ENCODE measurements at regions of chr19 and their contacts with region 1.

Region 1: DNA sequence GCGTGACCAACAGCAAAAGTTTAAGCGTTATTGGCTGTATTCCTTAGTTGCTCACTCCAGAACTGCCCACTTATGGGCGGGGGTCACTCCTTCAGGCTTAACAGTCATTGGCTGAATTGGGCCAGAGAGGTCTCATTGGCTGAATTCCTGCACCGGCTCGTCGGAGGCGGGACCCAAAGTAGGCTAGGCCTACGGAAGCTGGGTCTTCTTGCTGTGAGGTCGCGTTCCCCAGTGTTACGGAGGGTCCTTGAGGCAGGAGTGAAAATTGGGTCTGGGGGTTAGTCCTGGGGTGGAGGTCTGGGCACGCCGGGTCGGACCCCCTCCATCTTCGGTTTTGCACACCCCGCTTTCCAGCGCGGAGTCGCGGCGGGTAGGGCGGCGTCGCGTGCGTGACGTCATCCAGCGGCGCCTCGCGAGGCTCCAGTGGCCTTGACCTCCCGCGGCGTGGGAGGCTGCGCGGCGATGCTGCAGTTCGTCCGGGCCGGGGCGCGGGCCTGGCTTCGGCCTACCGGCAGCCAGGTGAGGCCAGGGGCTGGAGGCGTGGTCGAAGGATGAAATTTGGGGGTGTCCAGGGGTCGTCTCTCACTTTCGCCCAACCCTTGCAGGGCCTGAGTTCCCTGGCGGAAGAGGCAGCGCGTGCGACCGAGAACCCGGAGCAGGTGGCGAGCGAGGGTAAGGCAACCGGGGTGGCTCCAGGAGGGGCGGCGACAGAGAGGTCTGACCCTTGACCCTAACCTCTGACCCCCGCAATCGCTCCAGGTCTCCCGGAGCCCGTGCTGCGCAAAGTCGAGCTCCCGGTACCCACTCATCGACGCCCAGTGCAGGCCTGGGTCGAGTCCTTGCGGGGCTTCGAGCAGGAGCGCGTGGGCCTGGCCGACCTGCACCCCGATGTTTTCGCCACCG is at the start of gene MRPL4:
- DNase-seq: peak; percentile 82 to 98 (median 96)
- ATAC-seq: peak; percentile 98
- H3K4me3 ChIP-seq: peak within 1 kb of the TSS; percentile 90
- H3K4me3 Mint-ChIP-seq: peak within 1 kb of the TSS; percentile 93 to 100 (median 98)
- H3K27ac ChIP-seq: peak within 1 kb of the TSS; percentile 78
- H3K27ac Mint-ChIP-seq: peak within 1 kb of the TSS; percentile 92 to 99 (median 97)
- H3K4me1 ChIP-seq: peaks cover 6 to 12% of the 10 kb centered on the region in 2 donors
- H3K4me1 Mint-ChIP-seq: peaks cover 6 to 33% (median 24%) of the 10 kb centered on the region in 7 donors
- H3K27me3 ChIP-seq: no peaks in the 10 kb centered on the region
- H3K27me3 Mint-ChIP-seq: no peaks in the 10 kb centered on the region
- total RNA-seq, gene MRPL4: 36.8 to 70.5 (median 43.0) TPM

Region 2: DNA sequence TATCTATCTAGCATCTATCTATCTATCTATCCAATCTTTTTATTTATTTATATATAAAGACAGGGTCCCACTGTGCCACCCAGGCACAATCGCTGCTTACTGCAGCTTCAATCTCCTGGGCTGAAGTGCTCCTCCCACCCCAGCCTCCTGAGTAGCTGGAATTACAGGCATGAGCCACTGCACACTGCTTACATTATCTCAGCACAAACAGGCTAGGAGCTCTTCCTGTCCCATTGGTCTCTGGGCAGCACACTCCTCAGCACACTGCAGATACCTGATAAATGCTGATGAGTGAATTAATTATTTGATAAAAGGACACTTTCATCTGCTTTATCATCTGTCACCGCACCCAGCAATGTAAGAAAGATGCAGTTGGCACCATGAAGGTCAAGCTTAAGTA is 593.3 kb before region 1 on chr19:
- CTCF ChIA-PET with region 1: no interaction called
- POLR2A ChIA-PET with region 1: no interaction called
- intact Hi-C with region 1: no loop called
- DNase-seq: no peak
- ATAC-seq: no peak
- H3K4me3 ChIP-seq: no peak overlapping the region
- H3K4me3 Mint-ChIP-seq: no peak overlapping the region
- H3K27ac ChIP-seq: no peak overlapping the region
- H3K27ac Mint-ChIP-seq: no peak overlapping the region
- H3K4me1 ChIP-seq: no peaks in the 10 kb centered on the region
- H3K4me1 Mint-ChIP-seq: peaks cover 0 to 19% (median 4%) of the 10 kb centered on the region in 7 donors
- H3K27me3 ChIP-seq: no peaks in the 10 kb centered on the region
- H3K27me3 Mint-ChIP-seq: no peaks in the 10 kb centered on the region

Region 3: GRCh38 chr19:9827289-9828238 is 424.5 kb before region 1 on chr19 and contains the start of gene UBL5:
- CTCF ChIA-PET with region 1: no interaction called
- POLR2A ChIA-PET with region 1: no interaction called
- intact Hi-C with region 1: loop called in 1 of 2 experiments (anchors 2 kb)
- DNase-seq: peak; percentile 72 to 91 (median 89)
- ATAC-seq: peak; percentile 98
- H3K4me3 ChIP-seq: peak within 1 kb of the TSS; percentile 97
- H3K4me3 Mint-ChIP-seq: peak within 1 kb of the TSS; percentile 90 to 100 (median 99)
- H3K27ac ChIP-seq: peak within 1 kb of the TSS; percentile 87
- H3K27ac Mint-ChIP-seq: peak within 1 kb of the TSS; percentile 83 to 99 (median 98)
- H3K4me1 ChIP-seq: peaks cover 14 to 16% of the 10 kb centered on the region in 2 donors
- H3K4me1 Mint-ChIP-seq: peaks cover 15 to 45% (median 27%) of the 10 kb centered on the region in 7 donors
- H3K27me3 ChIP-seq: no peaks in the 10 kb centered on the region
- H3K27me3 Mint-ChIP-seq: no peaks in the 10 kb centered on the region
- total RNA-seq, gene UBL5: 182 to 375 (median 198) TPM

Region 4: DNA sequence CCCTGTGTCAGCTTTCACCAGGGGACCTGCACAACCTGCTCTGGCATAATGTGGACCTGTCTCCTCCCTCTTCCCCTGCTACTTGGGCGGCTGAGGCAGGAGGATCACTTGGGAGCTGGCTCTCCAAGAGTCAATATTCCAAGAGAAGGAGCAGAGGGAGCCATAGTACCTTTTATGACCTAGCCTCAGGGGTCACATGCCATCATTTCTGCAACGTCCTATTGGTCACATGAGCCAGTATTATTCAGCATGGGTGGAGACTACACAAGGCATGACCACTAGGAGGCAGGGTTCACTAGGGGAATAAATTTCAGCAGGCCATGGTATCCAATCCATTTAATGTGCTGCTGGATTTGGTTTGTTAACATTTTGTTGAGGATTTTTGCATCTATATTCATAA is 177.9 kb before region 1 on chr19:
- CTCF ChIA-PET with region 1: interaction called, 3 read pairs
- POLR2A ChIA-PET with region 1: no interaction called
- intact Hi-C with region 1: loop called in 1 of 2 experiments (anchors 1 kb)
- DNase-seq: peak in 8 of 9 donors; percentile 29 to 58 (median 42)
- ATAC-seq: peak; percentile 87
- H3K4me3 ChIP-seq: no peak overlapping the region
- H3K4me3 Mint-ChIP-seq: no peak overlapping the region
- H3K27ac ChIP-seq: no peak overlapping the region
- H3K27ac Mint-ChIP-seq: no peak overlapping the region
- H3K4me1 ChIP-seq: no peaks in the 10 kb centered on the region
- H3K4me1 Mint-ChIP-seq: peaks cover 0 to 2% (median 0%) of the 10 kb centered on the region in 7 donors
- H3K27me3 ChIP-seq: no peaks in the 10 kb centered on the region
- H3K27me3 Mint-ChIP-seq: peaks cover 0 to 13% (median 0%) of the 10 kb centered on the region in 5 donors

Region 5: DNA sequence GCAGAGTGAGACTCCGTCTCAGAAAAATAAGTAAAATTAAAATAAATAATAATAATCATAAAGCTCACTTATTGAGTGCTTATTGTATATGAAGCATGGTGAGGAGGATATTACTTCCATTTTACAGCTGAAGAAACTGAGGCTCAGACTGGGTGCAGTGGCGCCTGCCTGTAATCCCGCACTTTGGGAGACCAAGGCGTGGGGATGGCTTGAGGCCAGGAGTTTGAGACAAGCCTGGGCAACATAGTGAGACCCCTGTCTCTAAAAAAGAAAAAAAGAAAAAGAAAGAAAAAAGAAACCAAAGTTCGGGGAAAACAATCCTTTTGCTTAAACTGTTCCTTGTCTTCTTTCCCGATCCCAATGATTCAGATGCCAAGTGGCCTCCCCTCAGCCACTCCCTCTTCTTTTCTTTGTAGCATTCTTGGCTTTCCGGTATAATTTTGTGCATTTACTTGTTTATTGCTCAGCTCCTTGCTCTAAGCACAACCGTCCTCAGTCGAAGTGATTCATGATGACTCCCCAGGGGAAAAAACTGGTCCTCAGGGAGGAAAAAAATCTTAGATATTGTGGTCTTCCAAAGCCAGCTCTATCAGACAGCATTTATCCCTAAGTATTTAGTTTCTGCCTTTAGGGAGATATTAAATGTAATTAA is 131.4 kb before region 1 on chr19:
- CTCF ChIA-PET with region 1: interaction called, 5 read pairs
- POLR2A ChIA-PET with region 1: no interaction called
- intact Hi-C with region 1: loop called (anchors 1 to 2 kb)
- DNase-seq: no peak
- ATAC-seq: no peak
- H3K4me3 ChIP-seq: no peak overlapping the region
- H3K4me3 Mint-ChIP-seq: peak overlapping the region in 4 of 10 donors; percentile 15 to 42 (median 34)
- H3K27ac ChIP-seq: no peak overlapping the region
- H3K27ac Mint-ChIP-seq: no peak overlapping the region
- H3K4me1 ChIP-seq: peaks cover 10 to 25% of the 10 kb centered on the region in 2 donors
- H3K4me1 Mint-ChIP-seq: peaks cover 5 to 30% (median 15%) of the 10 kb centered on the region in 7 donors
- H3K27me3 ChIP-seq: no peaks in the 10 kb centered on the region
- H3K27me3 Mint-ChIP-seq: no peaks in the 10 kb centered on the region

Region 6: DNA sequence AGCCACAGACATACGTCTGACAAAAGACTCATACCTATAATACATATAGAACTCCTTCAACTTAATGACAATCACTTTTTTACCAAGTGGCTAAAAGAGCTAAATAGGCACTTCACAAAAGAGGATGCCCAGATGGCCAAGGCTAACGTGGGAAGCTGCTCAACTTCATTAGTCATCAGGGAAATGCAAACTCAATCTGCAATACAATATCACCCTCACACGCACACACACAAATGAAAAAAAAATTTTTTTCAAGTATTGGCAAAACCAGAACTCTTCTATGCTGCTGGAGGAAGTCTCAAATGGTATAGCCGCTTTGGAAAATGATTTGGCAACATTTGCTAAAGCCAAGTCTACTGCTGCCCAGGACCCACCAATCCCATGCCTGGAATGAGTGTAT is 42.7 kb before region 1 on chr19:
- CTCF ChIA-PET with region 1: no interaction called
- POLR2A ChIA-PET with region 1: no interaction called
- intact Hi-C with region 1: no loop called
- DNase-seq: no peak
- ATAC-seq: peak; percentile 44
- H3K4me3 ChIP-seq: no peak overlapping the region
- H3K4me3 Mint-ChIP-seq: no peak overlapping the region
- H3K27ac ChIP-seq: no peak overlapping the region
- H3K27ac Mint-ChIP-seq: no peak overlapping the region
- H3K4me1 ChIP-seq: no peaks in the 10 kb centered on the region
- H3K4me1 Mint-ChIP-seq: peaks cover 0 to 8% (median 0%) of the 10 kb centered on the region in 7 donors
- H3K27me3 ChIP-seq: no peaks in the 10 kb centered on the region
- H3K27me3 Mint-ChIP-seq: no peaks in the 10 kb centered on the region

Region 7: DNA sequence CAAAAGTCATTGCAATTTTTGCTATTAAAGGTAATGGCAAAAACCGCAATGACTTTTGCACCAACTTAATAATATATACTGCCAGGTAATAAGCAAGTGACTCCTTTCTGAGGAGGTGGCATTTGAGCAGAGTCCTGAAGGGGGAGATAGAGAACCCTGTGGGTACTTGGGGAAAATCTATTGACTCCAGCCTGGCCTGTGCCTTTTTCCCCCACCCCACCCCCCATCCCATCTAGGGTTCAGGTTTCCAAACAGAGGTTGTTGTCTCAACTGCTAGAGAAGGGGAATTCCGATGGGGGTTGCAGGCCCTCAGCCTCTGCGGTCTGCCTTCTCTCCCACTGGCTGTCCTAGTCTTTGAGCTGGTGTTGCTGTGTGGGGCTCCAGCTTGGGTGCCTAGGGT is 32.4 kb before region 1 on chr19:
- CTCF ChIA-PET with region 1: no interaction called
- POLR2A ChIA-PET with region 1: no interaction called
- intact Hi-C with region 1: loop called in 1 of 2 experiments (anchors 5 kb)
- DNase-seq: peak in 3 of 9 donors; percentile 17 to 33 (median 17)
- ATAC-seq: peak; percentile 81
- H3K4me3 ChIP-seq: no peak overlapping the region
- H3K4me3 Mint-ChIP-seq: no peak overlapping the region
- H3K27ac ChIP-seq: no peak overlapping the region
- H3K27ac Mint-ChIP-seq: no peak overlapping the region
- H3K4me1 ChIP-seq: no peaks in the 10 kb centered on the region
- H3K4me1 Mint-ChIP-seq: peaks cover 0 to 8% (median 3%) of the 10 kb centered on the region in 7 donors
- H3K27me3 ChIP-seq: no peaks in the 10 kb centered on the region
- H3K27me3 Mint-ChIP-seq: no peaks in the 10 kb centered on the region

Region 8: GRCh38 chr19:10292206-10292788 is 40.3 kb after region 1 on chr19:
- CTCF ChIA-PET with region 1: no interaction called
- POLR2A ChIA-PET with region 1: no interaction called
- intact Hi-C with region 1: no loop called
- DNase-seq: peak in 8 of 9 donors; percentile 49 to 85 (median 54)
- ATAC-seq: peak; percentile 74
- H3K4me3 ChIP-seq: peak overlapping the region; percentile 54
- H3K4me3 Mint-ChIP-seq: peak overlapping the region; percentile 70 to 87 (median 80)
- H3K27ac ChIP-seq: no peak overlapping the region
- H3K27ac Mint-ChIP-seq: peak overlapping the region in 4 of 9 donors; percentile 34 to 88 (median 68)
- H3K4me1 ChIP-seq: peaks cover 62 to 66% of the 10 kb centered on the region in 2 donors
- H3K4me1 Mint-ChIP-seq: peaks cover 44 to 71% (median 60%) of the 10 kb centered on the region in 7 donors
- H3K27me3 ChIP-seq: peaks cover 8 to 55% of the 10 kb centered on the region in 2 donors
- H3K27me3 Mint-ChIP-seq: peaks cover 43 to 81% (median 52%) of the 10 kb centered on the region in 5 donors

Region 9: DNA sequence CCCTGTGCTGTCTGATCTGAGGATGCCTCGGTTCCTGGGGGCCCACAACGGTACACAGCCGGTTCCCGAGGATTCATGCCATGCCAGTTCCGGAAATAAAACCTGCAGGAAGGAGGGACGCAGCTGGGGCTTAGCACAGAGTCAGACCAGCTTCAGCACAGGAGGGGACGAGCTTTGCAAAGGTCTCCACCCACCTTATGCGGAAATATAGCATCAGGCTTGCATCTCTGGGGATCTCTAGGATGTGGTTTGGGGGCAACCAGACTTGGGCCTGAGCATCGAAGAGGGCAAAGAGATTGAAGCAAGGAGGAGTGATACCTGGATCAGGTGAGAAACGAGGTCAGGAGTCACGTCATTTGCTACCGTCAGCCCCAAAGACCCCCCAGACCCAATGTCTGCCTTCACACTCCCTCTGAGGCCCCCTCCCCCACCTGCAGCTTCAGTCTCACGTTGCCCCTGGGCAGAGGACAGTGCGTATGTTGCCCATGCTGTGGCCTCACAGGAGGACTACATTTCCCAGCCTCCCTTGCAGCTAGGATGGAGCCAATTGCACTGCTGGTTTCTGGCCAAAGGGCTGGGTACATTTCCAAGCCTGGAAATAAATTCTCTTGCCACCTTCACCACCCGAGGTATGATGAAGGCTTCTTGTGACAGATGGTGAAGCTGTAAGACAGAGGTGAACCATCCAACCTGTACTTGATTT is 116.2 kb after region 1 on chr19:
- CTCF ChIA-PET with region 1: no interaction called
- POLR2A ChIA-PET with region 1: no interaction called
- intact Hi-C with region 1: no loop called
- DNase-seq: no peak
- ATAC-seq: no peak
- H3K4me3 ChIP-seq: no peak overlapping the region
- H3K4me3 Mint-ChIP-seq: no peak overlapping the region
- H3K27ac ChIP-seq: no peak overlapping the region
- H3K27ac Mint-ChIP-seq: no peak overlapping the region
- H3K4me1 ChIP-seq: no peaks in the 10 kb centered on the region
- H3K4me1 Mint-ChIP-seq: peaks cover 0 to 6% (median 0%) of the 10 kb centered on the region in 7 donors
- H3K27me3 ChIP-seq: no peaks in the 10 kb centered on the region
- H3K27me3 Mint-ChIP-seq: no peaks in the 10 kb centered on the region

Region 10: DNA sequence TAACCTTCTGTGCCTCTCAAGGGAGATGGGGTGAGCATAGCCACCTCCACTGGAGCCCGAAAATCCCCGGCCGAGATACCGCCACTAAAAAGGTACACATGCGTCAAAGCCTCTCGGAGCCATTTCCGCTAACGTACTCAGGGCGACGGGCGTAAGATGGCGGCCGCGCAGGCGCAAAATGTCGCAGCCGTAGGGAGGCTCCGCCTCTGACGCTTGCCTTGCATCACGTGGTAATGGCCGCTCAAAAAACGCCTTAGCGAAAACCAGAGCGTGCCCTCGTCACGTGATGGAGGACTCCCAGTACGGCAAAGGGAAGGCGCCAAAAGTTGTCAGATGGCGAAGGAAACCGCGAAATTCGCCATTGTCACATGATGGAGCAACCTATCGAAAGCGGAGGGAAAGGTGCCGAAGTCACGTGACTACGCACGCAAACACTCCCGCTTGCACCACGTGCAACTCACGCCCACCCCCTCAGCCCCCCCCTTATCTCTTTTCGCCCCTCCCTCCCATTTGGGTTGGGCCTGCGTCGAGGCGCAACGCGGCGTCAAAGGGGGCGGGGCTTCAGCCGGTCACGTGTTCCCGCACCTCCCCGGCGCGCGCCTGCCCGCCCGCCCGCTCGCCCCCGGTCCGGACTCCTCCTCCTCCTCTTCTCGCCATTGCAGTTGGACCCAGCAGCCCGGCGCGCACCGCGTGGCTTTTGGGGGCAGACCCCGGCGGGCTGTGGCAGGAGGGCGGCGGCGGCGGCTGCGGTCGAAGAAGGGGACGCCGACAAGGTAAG is 401.9 kb after region 1 on chr19 and contains the start of gene ILF3:
- CTCF ChIA-PET with region 1: no interaction called
- POLR2A ChIA-PET with region 1: no interaction called
- intact Hi-C with region 1: loop called in 1 of 2 experiments (anchors 5 kb)
- DNase-seq: peak; percentile 97 to 100 (median 100)
- ATAC-seq: peak; percentile 89
- H3K4me3 ChIP-seq: peak within 1 kb of the TSS; percentile 87
- H3K4me3 Mint-ChIP-seq: peak within 1 kb of the TSS; percentile 93 to 98 (median 95)
- H3K27ac ChIP-seq: peak within 1 kb of the TSS; percentile 100
- H3K27ac Mint-ChIP-seq: peak within 1 kb of the TSS; percentile 94 to 99 (median 98)
- H3K4me1 ChIP-seq: peaks cover 32 to 38% of the 10 kb centered on the region in 2 donors
- H3K4me1 Mint-ChIP-seq: peaks cover 17 to 61% (median 42%) of the 10 kb centered on the region in 7 donors
- H3K27me3 ChIP-seq: no peaks in the 10 kb centered on the region
- H3K27me3 Mint-ChIP-seq: peaks cover 0 to 3% (median 0%) of the 10 kb centered on the region in 5 donors
- total RNA-seq, gene ILF3: 346 to 515 (median 368) TPM

Measured in naive thymus-derived CD4-positive, alpha-beta T cell (primary cell).